ENCODE measurements at regions of chr1 and their contacts with region 1.

Region 1: DNA sequence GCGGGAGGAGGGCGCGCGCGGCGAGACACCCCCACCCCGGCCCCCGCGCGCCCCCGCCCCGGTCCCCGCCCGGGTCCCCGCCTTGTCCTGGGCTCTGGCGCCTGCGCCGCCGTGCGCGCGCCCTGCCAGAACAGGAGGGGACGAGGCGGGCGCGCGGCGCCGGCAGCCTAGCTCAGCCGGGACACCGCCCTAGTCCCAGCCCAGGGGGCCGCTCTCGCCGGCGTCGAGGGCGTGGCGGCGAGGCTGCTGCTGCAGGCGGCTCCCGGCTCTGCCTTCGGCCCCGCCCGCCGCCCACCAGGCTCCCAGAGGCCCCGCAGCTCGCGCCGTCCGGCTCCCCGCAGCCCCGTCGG is at the start of gene RCAN3:
- DNase-seq: peak; percentile 82 to 94 (median 92)
- ATAC-seq: peak; percentile 81
- H3K4me3 ChIP-seq: peak within 1 kb of the TSS; percentile 84
- H3K4me3 Mint-ChIP-seq: peak within 1 kb of the TSS; percentile 90 to 100 (median 99)
- H3K27ac ChIP-seq: peak within 1 kb of the TSS; percentile 99
- H3K27ac Mint-ChIP-seq: peak within 1 kb of the TSS; percentile 95 to 99 (median 98)
- H3K4me1 ChIP-seq: peaks cover 42 to 53% of the 10 kb centered on the region in 2 donors
- H3K4me1 Mint-ChIP-seq: peaks cover 38 to 65% (median 60%) of the 10 kb centered on the region in 7 donors
- H3K27me3 ChIP-seq: no peaks in the 10 kb centered on the region
- H3K27me3 Mint-ChIP-seq: peaks cover 0 to 9% (median 0%) of the 10 kb centered on the region in 5 donors
- total RNA-seq, gene RCAN3: 68.5 to 247 (median 183) TPM

Region 2: DNA sequence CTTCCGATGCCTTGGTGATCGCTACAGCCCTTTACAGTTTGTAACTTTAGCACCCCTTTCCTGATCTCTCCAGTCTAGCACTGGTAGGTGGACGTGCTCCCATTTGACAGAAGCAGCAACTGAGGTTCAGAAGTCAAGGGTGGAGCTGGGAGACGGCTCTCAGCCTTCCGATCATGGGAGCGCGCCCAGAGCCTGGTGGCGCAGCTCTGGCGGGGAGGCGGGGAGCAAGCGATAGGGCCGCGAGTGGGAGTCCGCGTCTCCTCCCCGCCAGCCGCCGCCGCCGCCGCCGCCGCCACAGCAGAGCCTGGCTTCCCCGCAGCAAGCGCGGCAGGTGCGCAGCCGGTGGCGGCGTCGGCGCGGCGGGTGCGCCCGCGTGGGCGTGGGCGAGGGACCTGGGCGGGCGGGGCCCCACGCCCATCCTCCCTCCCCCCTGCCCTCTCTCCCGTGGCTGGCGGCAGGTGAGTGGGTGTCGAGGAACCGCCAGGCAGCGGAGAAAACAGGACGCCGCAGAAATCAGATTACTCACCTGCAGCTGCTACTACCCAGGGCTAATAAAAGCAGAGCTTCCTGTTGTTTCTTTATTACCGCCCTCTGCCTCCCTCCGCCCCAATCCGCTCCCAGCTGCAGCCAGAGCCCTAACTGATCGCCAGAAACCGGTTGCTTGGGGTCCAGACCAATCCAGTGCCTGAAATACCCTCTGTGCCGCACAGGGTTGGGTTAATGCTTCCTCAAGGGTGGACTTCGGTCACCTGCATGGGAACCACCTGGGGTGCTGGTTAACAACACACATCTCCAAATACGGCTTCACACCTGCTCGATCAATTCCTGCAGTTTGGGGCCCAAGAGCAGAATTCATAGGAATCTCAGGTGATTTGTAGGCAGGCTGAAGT is 883.1 kb before region 1 on chr1:
- CTCF ChIA-PET with region 1: no interaction called
- POLR2A ChIA-PET with region 1: no interaction called
- intact Hi-C with region 1: loop called in 1 of 2 experiments (anchors 10 kb)
- DNase-seq: peak; percentile 58 to 88 (median 84)
- ATAC-seq: peak; percentile 93
- H3K4me3 ChIP-seq: peak overlapping the region; percentile 65
- H3K4me3 Mint-ChIP-seq: peak overlapping the region; percentile 63 to 85 (median 78)
- H3K27ac ChIP-seq: peak overlapping the region; percentile 81
- H3K27ac Mint-ChIP-seq: peak overlapping the region; percentile 84 to 99 (median 97)
- H3K4me1 ChIP-seq: peaks cover 45 to 79% of the 10 kb centered on the region in 2 donors
- H3K4me1 Mint-ChIP-seq: peaks cover 68 to 97% (median 90%) of the 10 kb centered on the region in 7 donors
- H3K27me3 ChIP-seq: no peaks in the 10 kb centered on the region
- H3K27me3 Mint-ChIP-seq: peaks cover 0 to 11% (median 0%) of the 10 kb centered on the region in 5 donors

Region 3: GRCh38 chr1:24415334-24415909 is 87.3 kb before region 1 on chr1 and contains the start of gene NIPAL3:
- CTCF ChIA-PET with region 1: interaction called, 17 read pairs
- POLR2A ChIA-PET with region 1: interaction called, 149 read pairs
- intact Hi-C with region 1: loop called (anchors 1 kb)
- DNase-seq: peak; percentile 81 to 99 (median 97)
- ATAC-seq: peak; percentile 98
- H3K4me3 ChIP-seq: peak within 1 kb of the TSS; percentile 76
- H3K4me3 Mint-ChIP-seq: peak within 1 kb of the TSS; percentile 95 to 100 (median 98)
- H3K27ac ChIP-seq: peak within 1 kb of the TSS; percentile 74
- H3K27ac Mint-ChIP-seq: peak within 1 kb of the TSS; percentile 75 to 99 (median 90)
- H3K4me1 ChIP-seq: peaks cover 23 to 44% of the 10 kb centered on the region in 2 donors
- H3K4me1 Mint-ChIP-seq: peaks cover 51 to 91% (median 75%) of the 10 kb centered on the region in 7 donors
- H3K27me3 ChIP-seq: no peaks in the 10 kb centered on the region
- H3K27me3 Mint-ChIP-seq: no peaks in the 10 kb centered on the region
- total RNA-seq, gene NIPAL3: 35.5 to 65.0 (median 54.5) TPM

Region 4: DNA sequence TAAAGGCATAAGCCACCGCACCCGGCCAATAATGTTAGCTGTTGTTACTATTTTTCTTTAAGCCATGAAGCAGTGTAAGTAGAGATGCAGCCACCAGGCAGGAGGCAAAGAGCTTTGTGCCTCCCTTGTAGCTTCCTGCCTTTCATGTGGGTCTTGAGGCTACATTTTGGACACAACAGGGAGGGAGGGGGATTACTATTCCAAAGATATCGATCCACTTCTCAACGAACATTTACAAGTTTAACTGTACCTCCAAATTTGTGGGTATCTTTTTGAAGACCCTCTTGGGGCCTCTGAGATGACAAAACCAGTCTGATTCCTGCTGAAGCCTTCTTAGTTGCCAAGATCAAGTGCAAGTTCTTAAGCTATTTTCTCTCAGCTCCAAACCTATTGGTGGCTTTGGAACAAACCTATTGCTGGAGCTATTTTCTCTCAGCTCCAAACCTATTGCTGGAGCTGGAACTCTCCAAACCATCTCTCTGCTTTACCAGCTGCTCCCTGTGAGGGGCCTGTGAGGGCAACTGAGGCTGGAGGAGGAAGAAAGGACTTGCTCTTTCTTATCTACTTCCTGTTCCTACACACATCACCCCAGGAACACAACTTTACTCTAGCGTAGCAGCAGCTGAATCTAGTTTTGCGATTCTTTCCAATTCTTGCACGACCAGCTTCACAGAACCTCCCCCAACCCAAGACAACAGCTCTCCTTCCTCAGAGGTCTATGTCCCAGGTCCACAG is 16.2 kb before region 1 on chr1:
- CTCF ChIA-PET with region 1: interaction called, 44 read pairs
- POLR2A ChIA-PET with region 1: interaction called, 929 read pairs
- intact Hi-C with region 1: loop called (anchors 1 kb)
- DNase-seq: peak in 7 of 9 donors; percentile 69 to 82 (median 77)
- ATAC-seq: peak; percentile 69
- H3K4me3 ChIP-seq: peak overlapping the region; percentile 11
- H3K4me3 Mint-ChIP-seq: peak overlapping the region; percentile 70 to 86 (median 78)
- H3K27ac ChIP-seq: peak overlapping the region; percentile 76
- H3K27ac Mint-ChIP-seq: peak overlapping the region; percentile 93 to 99 (median 97)
- H3K4me1 ChIP-seq: peaks cover 52 to 81% of the 10 kb centered on the region in 2 donors
- H3K4me1 Mint-ChIP-seq: peaks cover 47 to 90% (median 76%) of the 10 kb centered on the region in 7 donors
- H3K27me3 ChIP-seq: no peaks in the 10 kb centered on the region
- H3K27me3 Mint-ChIP-seq: no peaks in the 10 kb centered on the region

Region 5: DNA sequence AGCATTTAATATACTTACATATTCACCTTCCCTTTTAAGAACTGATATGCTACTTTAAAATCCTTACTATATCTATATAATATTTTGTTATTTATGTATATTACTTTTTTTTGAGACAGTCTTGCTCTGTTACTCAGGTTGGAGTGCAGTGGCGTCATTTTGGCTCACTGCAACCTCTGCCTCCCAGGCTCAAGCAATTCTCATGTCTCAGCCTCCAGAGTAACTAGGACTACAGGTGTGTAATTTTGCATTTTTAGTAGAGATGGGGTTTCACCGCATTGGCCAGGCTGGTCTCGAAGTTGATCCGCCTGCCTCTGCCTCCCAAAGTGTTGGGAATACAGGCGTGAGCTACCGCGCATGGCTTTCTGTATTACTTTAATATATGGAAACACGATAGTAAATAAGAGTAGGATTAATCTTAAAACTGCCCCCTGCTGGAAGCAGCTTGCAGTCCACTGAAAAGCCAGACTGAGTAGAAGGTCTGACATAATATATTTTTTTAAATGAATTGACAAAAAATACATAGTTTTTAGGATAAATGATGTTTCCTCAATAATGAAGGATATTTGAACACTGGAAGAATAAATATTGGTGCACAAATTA is 24.4 kb after region 1 on chr1:
- CTCF ChIA-PET with region 1: interaction called, 14 read pairs
- POLR2A ChIA-PET with region 1: interaction called, 99 read pairs
- intact Hi-C with region 1: loop called (anchors 1 kb)
- DNase-seq: peak in 8 of 9 donors; percentile 28 to 66 (median 56)
- ATAC-seq: peak; percentile 69
- H3K4me3 ChIP-seq: no peak overlapping the region
- H3K4me3 Mint-ChIP-seq: peak overlapping the region in 7 of 10 donors; percentile 23 to 57 (median 39)
- H3K27ac ChIP-seq: peak overlapping the region; percentile 40
- H3K27ac Mint-ChIP-seq: peak overlapping the region in 8 of 9 donors; percentile 32 to 93 (median 84)
- H3K4me1 ChIP-seq: peaks cover 0 to 49% of the 10 kb centered on the region in 2 donors
- H3K4me1 Mint-ChIP-seq: peaks cover 31 to 86% (median 71%) of the 10 kb centered on the region in 7 donors
- H3K27me3 ChIP-seq: no peaks in the 10 kb centered on the region
- H3K27me3 Mint-ChIP-seq: no peaks in the 10 kb centered on the region

Region 6: DNA sequence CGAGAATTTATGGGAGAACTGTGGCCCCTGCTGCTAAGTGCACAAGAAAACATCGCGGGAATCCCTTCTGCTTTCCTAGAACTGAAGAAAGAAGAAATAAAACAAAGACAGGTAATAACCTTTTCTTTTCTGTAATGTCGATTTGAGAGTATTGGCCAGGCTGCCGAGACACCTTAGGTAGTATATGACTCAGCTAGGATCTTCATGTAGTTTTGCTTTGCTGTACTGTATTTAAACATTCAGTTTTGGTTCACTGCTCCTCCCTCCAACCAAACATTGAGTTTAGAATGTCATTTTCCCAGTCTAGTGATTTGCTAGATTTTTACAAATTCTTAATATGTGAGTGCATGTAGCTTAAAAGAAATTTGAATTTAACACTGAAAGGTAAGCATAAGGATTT is 146.2 kb after region 1 on chr1:
- CTCF ChIA-PET with region 1: no interaction called
- POLR2A ChIA-PET with region 1: no interaction called
- intact Hi-C with region 1: no loop called
- DNase-seq: no peak
- ATAC-seq: no peak
- H3K4me3 ChIP-seq: no peak overlapping the region
- H3K4me3 Mint-ChIP-seq: no peak overlapping the region
- H3K27ac ChIP-seq: no peak overlapping the region
- H3K27ac Mint-ChIP-seq: peak overlapping the region in 1 of 9 donors; percentile 23
- H3K4me1 ChIP-seq: peaks cover 16 to 24% of the 10 kb centered on the region in 2 donors
- H3K4me1 Mint-ChIP-seq: peaks cover 18 to 70% (median 57%) of the 10 kb centered on the region in 7 donors
- H3K27me3 ChIP-seq: no peaks in the 10 kb centered on the region
- H3K27me3 Mint-ChIP-seq: no peaks in the 10 kb centered on the region

Region 7: DNA sequence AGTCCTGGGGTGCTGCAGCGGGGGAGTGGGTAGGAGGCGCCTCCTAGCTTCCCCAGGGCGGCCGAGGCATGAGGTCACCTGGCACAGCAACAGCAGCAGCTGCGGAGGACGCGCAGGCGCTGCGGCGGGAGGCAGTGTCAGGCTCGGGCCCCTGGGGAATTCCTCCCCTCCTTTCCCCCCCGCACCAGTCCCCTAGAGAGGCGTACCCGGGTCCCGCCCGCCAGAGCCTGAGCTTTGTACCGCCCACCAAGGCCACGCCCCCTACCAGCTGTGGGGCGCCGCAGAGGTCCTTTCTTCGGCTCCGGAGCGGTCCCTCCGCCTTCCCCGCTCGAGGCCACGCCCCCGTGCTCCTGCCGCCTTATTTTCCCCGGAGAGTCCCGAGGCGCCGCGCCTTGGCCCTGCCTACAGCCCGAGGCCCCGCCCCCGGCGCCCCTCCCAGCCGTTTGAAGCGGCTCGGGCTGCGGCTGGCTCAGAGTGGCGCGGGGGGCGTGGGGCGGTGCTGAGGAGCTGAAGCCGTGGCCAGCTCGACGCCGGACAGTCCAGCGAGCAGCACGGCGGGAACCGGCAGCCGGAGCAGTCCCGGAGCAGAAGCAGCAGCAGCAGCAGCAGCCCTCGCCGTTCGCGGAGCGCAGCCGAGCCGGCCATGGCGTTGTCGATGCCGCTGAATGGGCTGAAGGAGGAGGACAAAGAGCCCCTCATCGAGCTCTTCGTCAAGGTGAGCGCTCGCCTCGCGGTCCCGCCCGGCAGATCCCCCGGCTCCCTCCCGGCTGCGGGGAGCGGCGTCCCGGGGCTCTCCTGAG is 242.4 kb after region 1 on chr1 and contains the start of gene CLIC4:
- CTCF ChIA-PET with region 1: no interaction called
- POLR2A ChIA-PET with region 1: no interaction called
- intact Hi-C with region 1: loop called (anchors 1 to 10 kb)
- DNase-seq: peak; percentile 97 to 100 (median 98)
- ATAC-seq: peak; percentile 97
- H3K4me3 ChIP-seq: peak within 1 kb of the TSS; percentile 55
- H3K4me3 Mint-ChIP-seq: peak within 1 kb of the TSS; percentile 84 to 94 (median 89)
- H3K27ac ChIP-seq: peak within 1 kb of the TSS; percentile 57
- H3K27ac Mint-ChIP-seq: peak within 1 kb of the TSS; percentile 18 to 89 (median 79)
- H3K4me1 ChIP-seq: peaks cover 0 to 4% of the 10 kb centered on the region in 2 donors
- H3K4me1 Mint-ChIP-seq: peaks cover 7 to 57% (median 15%) of the 10 kb centered on the region in 7 donors
- H3K27me3 ChIP-seq: no peaks in the 10 kb centered on the region
- H3K27me3 Mint-ChIP-seq: peaks cover 0 to 10% (median 0%) of the 10 kb centered on the region in 5 donors
- total RNA-seq, gene CLIC4: 1.4 to 16.8 (median 5.1) TPM

Region 8: DNA sequence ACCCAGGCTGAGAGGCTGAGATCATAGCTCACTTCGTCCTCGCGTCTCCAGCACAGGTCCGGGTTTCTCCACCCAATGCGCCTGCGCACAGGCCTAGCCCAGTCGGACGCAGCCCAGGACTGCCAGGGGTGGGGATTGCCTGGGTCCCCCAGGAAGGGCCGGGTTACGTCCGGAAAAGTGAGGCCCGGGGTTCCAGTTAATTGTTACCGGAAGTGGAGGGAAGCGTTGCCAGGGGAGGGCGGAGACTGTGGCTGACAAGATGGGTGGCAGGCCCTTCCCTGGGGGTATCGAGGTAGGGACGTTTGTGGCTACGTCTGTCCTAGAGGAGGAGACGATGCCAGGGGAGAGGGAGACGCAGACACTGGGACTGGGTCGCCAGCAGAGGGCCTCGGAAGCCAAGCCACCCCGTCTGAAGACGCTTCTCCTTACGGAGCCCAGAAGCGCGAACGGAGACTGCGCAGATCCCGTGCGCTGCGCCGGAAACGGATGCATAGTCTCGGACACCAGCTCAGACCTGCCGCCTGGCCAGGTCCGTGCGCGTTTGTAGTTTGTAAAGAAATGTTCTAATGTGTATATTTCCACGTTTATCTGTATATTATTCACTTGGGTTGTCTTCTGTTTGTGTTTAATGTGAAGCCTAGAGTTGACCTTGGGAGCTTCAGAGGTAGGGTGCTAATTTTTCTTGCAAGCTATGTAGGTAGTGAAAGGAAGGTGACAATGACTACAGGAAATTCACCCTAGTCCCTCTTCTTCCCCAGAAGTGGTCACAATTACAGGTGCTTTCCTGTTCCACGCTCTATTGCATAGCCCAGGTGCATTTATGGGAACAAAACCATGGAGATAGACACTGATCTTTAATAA is 737.2 kb after region 1 on chr1:
- CTCF ChIA-PET with region 1: no interaction called
- POLR2A ChIA-PET with region 1: no interaction called
- intact Hi-C with region 1: loop called in 1 of 2 experiments (anchors 10 kb)
- DNase-seq: peak; percentile 72 to 91 (median 79)
- ATAC-seq: peak; percentile 92
- H3K4me3 ChIP-seq: peak overlapping the region; percentile 28
- H3K4me3 Mint-ChIP-seq: peak overlapping the region; percentile 87 to 93 (median 91)
- H3K27ac ChIP-seq: peak overlapping the region; percentile 80
- H3K27ac Mint-ChIP-seq: peak overlapping the region; percentile 89 to 98 (median 97)
- H3K4me1 ChIP-seq: peaks cover 33 to 37% of the 10 kb centered on the region in 2 donors
- H3K4me1 Mint-ChIP-seq: peaks cover 23 to 74% (median 63%) of the 10 kb centered on the region in 7 donors
- H3K27me3 ChIP-seq: no peaks in the 10 kb centered on the region
- H3K27me3 Mint-ChIP-seq: no peaks in the 10 kb centered on the region